Activated CD4-positive, alpha-beta T cell treated with anti-CD3 and anti-CD28 coated beads, Interleukin-2, amount 10 ng/mL, durations not matched to agents 7 days and 5 days (primary cell): ENCODE measurements at regions of chr7 and their contacts with region 1.

Region 1: DNA sequence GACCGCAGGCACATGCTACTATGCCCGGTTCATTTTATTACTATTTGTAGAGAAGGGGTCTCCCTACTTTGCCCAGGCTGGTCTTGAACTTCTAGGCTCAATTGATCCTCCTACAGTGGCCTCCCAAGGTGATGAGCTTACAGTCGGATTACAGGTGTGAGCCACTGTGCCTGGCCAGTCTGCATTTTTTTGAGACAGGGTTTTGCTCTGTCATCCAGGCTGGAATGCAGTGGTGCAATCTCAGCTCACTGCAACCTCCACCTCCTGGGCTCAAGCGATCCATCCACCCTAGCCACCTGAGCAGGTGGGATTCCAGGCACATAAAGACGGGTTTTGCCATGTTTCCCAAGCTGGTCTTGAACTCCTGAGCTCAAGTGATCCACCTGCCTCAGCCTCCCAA is 2.3 kb upstream of the H2BK1 start:
- DNase-seq: no peak
- H3K4me3 Mint-ChIP-seq: no peak overlapping the region
- H3K27ac Mint-ChIP-seq: no peak overlapping the region
- H3K4me1 Mint-ChIP-seq: peaks cover 8% of the 10 kb centered on the region
- H3K27me3 Mint-ChIP-seq: no peaks in the 10 kb centered on the region

Region 2: GRCh38 chr7:151226875-151227782 is 14.5 kb after region 1 on chr7 and contains the start of gene ABCF2:
- CTCF ChIA-PET with region 1: interaction called, 10 read pairs
- POLR2A ChIA-PET with region 1: no interaction called
- DNase-seq: peak; percentile 99
- H3K4me3 Mint-ChIP-seq: peak within 1 kb of the TSS; percentile 99
- H3K27ac Mint-ChIP-seq: peak within 1 kb of the TSS; percentile 95
- H3K4me1 Mint-ChIP-seq: peaks cover 51% of the 10 kb centered on the region
- H3K27me3 Mint-ChIP-seq: no peaks in the 10 kb centered on the region
- total RNA-seq, gene ABCF2: 31.7 to 34.3 TPM